Left cardiac atrium (tissue), 4 donors: ENCODE measurements at regions of chr14 and their contacts with region 1.

Region 1: GRCh38 chr14:77862154-77862786 is 62.4 kb downstream of the ADCK1 start:
- DNase-seq: peak; percentile 80
- ATAC-seq: peak; percentile 78 to 79

Region 2: GRCh38 chr14:77752799-77753521 is 109.3 kb before region 1 on chr14:
- intact Hi-C with region 1: no loop called
- DNase-seq: no peak
- ATAC-seq: peak in 1 of 2 donors; percentile 36

Region 3: DNA sequence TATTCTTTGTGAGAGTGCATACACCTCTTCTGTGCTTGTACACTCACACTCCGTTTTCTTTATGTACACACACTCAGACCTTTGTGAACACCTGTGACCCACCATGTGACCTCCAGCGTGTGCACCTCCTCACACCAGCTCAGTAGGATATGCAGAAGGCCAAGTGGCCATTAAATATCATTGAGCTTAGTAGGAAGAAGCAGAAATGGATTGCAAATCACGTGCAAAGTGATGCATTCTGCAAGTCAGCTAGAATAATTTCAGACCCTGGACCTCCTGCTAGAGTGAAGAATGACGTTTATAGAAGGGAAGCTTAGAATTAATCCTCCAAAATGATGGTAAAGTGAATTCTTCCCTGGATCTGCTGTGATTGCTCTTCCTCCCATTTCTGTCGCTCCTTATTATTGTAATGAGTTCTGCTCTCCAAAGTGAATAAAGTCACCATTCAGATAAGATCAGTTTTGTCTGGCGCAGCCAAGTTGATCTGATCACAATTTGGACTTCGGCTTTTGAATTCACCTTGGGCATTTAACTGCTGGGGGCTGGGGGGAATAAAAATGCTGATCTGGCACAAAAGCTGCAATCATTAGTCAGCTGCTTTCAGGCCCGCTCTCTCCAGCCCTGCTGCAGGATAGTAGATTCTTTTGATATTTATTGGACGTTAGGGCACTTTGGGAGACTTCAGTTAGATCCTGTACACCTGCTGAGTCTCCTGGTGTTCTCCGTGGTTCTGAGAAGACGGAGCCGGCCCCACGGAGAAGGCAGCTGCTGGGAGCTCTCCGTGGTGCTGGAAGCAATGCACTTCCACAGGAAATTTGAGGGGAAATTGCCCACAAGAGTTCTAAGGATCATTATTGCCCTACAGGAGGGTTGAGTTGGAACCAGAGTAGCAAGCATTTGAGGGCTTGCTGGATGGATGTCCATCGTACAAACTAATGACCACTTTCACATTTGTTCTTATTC is 295.5 kb after region 1 on chr14:
- intact Hi-C with region 1: loop called in 1 of 2 experiments (anchors 10 kb)
- DNase-seq: peak; percentile 35
- ATAC-seq: no peak